CD4-positive, alpha-beta T cell (primary cell): ENCODE measurements at regions of chr2 and their contacts with region 1.

Region 1: GRCh38 chr2:189698020-189698887 is 23.8 kb downstream of the ANKAR start:
- DNase-seq: peak in 8 of 14 experiments; percentile 11 to 76 (median 49)
- ATAC-seq: peak; percentile 71
- H3K4me3 ChIP-seq: no peak overlapping the region
- H3K4me3 Mint-ChIP-seq: no peak overlapping the region
- H3K27ac ChIP-seq: no peak overlapping the region
- H3K27ac Mint-ChIP-seq: no peak overlapping the region
- H3K4me1 ChIP-seq: no peaks in the 10 kb centered on the region
- H3K4me1 Mint-ChIP-seq: no peaks in the 10 kb centered on the region
- H3K27me3 ChIP-seq: no peaks in the 10 kb centered on the region
- H3K27me3 Mint-ChIP-seq: no peaks in the 10 kb centered on the region
- CTCF ChIP-seq: peak; percentile 87

Region 2: GRCh38 chr2:188524519-188525113 is 1173.6 kb before region 1 on chr2:
- CTCF ChIA-PET with region 1: no interaction called
- POLR2A ChIA-PET with region 1: no interaction called
- intact Hi-C with region 1: loop called in 1 of 2 experiments (anchors 5 kb)
- DNase-seq: peak in 5 of 14 experiments; percentile 1 to 42 (median 11)
- ATAC-seq: no peak
- H3K4me3 ChIP-seq: no peak overlapping the region
- H3K4me3 Mint-ChIP-seq: no peak overlapping the region
- H3K27ac ChIP-seq: no peak overlapping the region
- H3K27ac Mint-ChIP-seq: no peak overlapping the region
- H3K4me1 ChIP-seq: no peaks in the 10 kb centered on the region
- H3K4me1 Mint-ChIP-seq: no peaks in the 10 kb centered on the region
- H3K27me3 ChIP-seq: no peaks in the 10 kb centered on the region
- H3K27me3 Mint-ChIP-seq: peaks cover 4% of the 10 kb centered on the region
- CTCF ChIP-seq: peak; percentile 56

Region 3: GRCh38 chr2:189674374-189675112 is 23.7 kb before region 1 on chr2 and contains the start of gene ANKAR:
- CTCF ChIA-PET with region 1: interaction called, 20 read pairs
- POLR2A ChIA-PET with region 1: interaction called, 5 read pairs
- intact Hi-C with region 1: loop called in 1 of 2 experiments (anchors 1 kb)
- DNase-seq: peak; percentile 61 to 93 (median 74)
- ATAC-seq: peak; percentile 93
- H3K4me3 ChIP-seq: peak within 1 kb of the TSS; percentile 71
- H3K4me3 Mint-ChIP-seq: peak within 1 kb of the TSS; percentile 95
- H3K27ac ChIP-seq: peak within 1 kb of the TSS; percentile 73 to 81
- H3K27ac Mint-ChIP-seq: peak within 1 kb of the TSS; percentile 98
- H3K4me1 ChIP-seq: peaks cover 21% of the 10 kb centered on the region
- H3K4me1 Mint-ChIP-seq: peaks cover 29% of the 10 kb centered on the region
- H3K27me3 ChIP-seq: no peaks in the 10 kb centered on the region
- H3K27me3 Mint-ChIP-seq: no peaks in the 10 kb centered on the region
- CTCF ChIP-seq: peak; percentile 76
- total RNA-seq, gene ANKAR: 7.9 to 8.0 TPM